ENCODE measurements at regions of chr5 and their contacts with region 1.

Region 1: GRCh38 chr5:160119142-160119904 is at the start of gene PWWP2A:
- DNase-seq: peak; percentile 86 to 100 (median 99)
- ATAC-seq: peak; percentile 96
- H3K4me3 ChIP-seq: peak within 1 kb of the TSS; percentile 79
- H3K4me3 Mint-ChIP-seq: peak within 1 kb of the TSS; percentile 83 to 99 (median 94)
- H3K27ac ChIP-seq: peak within 1 kb of the TSS; percentile 83
- H3K27ac Mint-ChIP-seq: peak within 1 kb of the TSS; percentile 83 to 98 (median 94)
- H3K4me1 ChIP-seq: peaks cover 0 to 5% of the 10 kb centered on the region in 2 donors
- H3K4me1 Mint-ChIP-seq: peaks cover 0 to 25% (median 20%) of the 10 kb centered on the region in 7 donors
- H3K27me3 ChIP-seq: no peaks in the 10 kb centered on the region
- H3K27me3 Mint-ChIP-seq: peaks cover 0 to 8% (median 0%) of the 10 kb centered on the region in 5 donors
- total RNA-seq, gene PWWP2A: 21.2 to 43.6 (median 29.5) TPM

Region 2: GRCh38 chr5:159100025-159100781 is 1019.1 kb before region 1 on chr5:
- CTCF ChIA-PET with region 1: no interaction called
- POLR2A ChIA-PET with region 1: no interaction called
- intact Hi-C with region 1: loop called (anchors 2 to 5 kb)
- DNase-seq: peak; percentile 72 to 86 (median 84)
- ATAC-seq: peak; percentile 93
- H3K4me3 ChIP-seq: peak overlapping the region; percentile 59
- H3K4me3 Mint-ChIP-seq: peak overlapping the region; percentile 87 to 93 (median 92)
- H3K27ac ChIP-seq: no peak overlapping the region
- H3K27ac Mint-ChIP-seq: peak overlapping the region; percentile 29 to 89 (median 75)
- H3K4me1 ChIP-seq: peaks cover 13 to 19% of the 10 kb centered on the region in 2 donors
- H3K4me1 Mint-ChIP-seq: peaks cover 31 to 51% (median 35%) of the 10 kb centered on the region in 7 donors
- H3K27me3 ChIP-seq: peaks cover 18 to 22% of the 10 kb centered on the region in 2 donors
- H3K27me3 Mint-ChIP-seq: peaks cover 52 to 92% (median 60%) of the 10 kb centered on the region in 5 donors

Region 3: GRCh38 chr5:160008877-160009590 is 110.3 kb before region 1 on chr5 and contains the start of gene TTC1:
- CTCF ChIA-PET with region 1: no interaction called
- POLR2A ChIA-PET with region 1: interaction called, 6 read pairs
- intact Hi-C with region 1: loop called (anchors 1 kb)
- DNase-seq: peak; percentile 71 to 96 (median 91)
- ATAC-seq: peak; percentile 99
- H3K4me3 ChIP-seq: peak within 1 kb of the TSS; percentile 84
- H3K4me3 Mint-ChIP-seq: peak within 1 kb of the TSS; percentile 93 to 99 (median 96)
- H3K27ac ChIP-seq: peak within 1 kb of the TSS; percentile 85
- H3K27ac Mint-ChIP-seq: peak within 1 kb of the TSS; percentile 91 to 99 (median 97)
- H3K4me1 ChIP-seq: peaks cover 9 to 13% of the 10 kb centered on the region in 2 donors
- H3K4me1 Mint-ChIP-seq: peaks cover 19 to 40% (median 31%) of the 10 kb centered on the region in 7 donors
- H3K27me3 ChIP-seq: no peaks in the 10 kb centered on the region
- H3K27me3 Mint-ChIP-seq: peaks cover 0 to 3% (median 0%) of the 10 kb centered on the region in 5 donors
- total RNA-seq, gene TTC1: 24.3 to 56.5 (median 41.7) TPM

Region 4: DNA sequence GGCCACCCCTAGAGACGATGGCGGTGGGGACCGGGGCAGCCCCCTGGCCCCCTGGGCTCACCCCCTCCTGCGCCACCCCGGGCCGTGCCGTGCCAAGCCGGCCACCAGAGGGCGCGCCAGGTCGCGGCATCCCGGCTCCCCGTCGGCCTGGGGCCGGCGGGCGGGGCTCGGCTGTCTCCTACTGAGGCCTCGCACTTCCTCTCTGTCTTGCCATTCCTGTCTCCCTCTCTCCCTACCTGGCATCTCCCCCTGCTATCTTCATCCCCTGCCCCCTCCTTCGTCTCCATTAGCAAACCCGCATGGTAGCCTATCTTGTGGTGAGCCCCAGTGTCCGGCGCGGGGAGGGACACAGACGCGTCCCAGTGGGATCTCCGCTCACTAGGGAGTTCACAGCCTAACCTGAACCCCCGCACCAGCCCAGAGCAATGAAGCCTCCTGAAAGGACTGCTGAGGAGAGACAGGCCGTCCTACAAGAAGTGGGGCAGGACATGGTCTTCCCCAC is 80.1 kb after region 1 on chr5:
- CTCF ChIA-PET with region 1: no interaction called
- POLR2A ChIA-PET with region 1: no interaction called
- intact Hi-C with region 1: loop called (anchors 1 to 2 kb)
- DNase-seq: peak; percentile 35 to 86 (median 66)
- ATAC-seq: peak; percentile 93
- H3K4me3 ChIP-seq: peak overlapping the region; percentile 52
- H3K4me3 Mint-ChIP-seq: peak overlapping the region; percentile 54 to 88 (median 78)
- H3K27ac ChIP-seq: no peak overlapping the region
- H3K27ac Mint-ChIP-seq: peak overlapping the region in 2 of 9 donors; percentile 53 to 74
- H3K4me1 ChIP-seq: peaks cover 0 to 3% of the 10 kb centered on the region in 2 donors
- H3K4me1 Mint-ChIP-seq: peaks cover 0 to 11% (median 3%) of the 10 kb centered on the region in 7 donors
- H3K27me3 ChIP-seq: no peaks in the 10 kb centered on the region
- H3K27me3 Mint-ChIP-seq: peaks cover 0 to 15% (median 10%) of the 10 kb centered on the region in 5 donors

Region 5: GRCh38 chr5:160418561-160419457 is 299.5 kb after region 1 on chr5 and contains the start of gene SLU7:
- CTCF ChIA-PET with region 1: no interaction called
- POLR2A ChIA-PET with region 1: interaction called, 6 read pairs
- intact Hi-C with region 1: loop called (anchors 1 kb)
- DNase-seq: peak; percentile 80 to 93 (median 91)
- ATAC-seq: peak; percentile 86
- H3K4me3 ChIP-seq: peak within 1 kb of the TSS; percentile 94
- H3K4me3 Mint-ChIP-seq: peak within 1 kb of the TSS; percentile 91 to 100 (median 96)
- H3K27ac ChIP-seq: peak within 1 kb of the TSS; percentile 98
- H3K27ac Mint-ChIP-seq: peak within 1 kb of the TSS; percentile 95 to 100 (median 98)
- H3K4me1 ChIP-seq: peaks cover 23 to 28% of the 10 kb centered on the region in 2 donors
- H3K4me1 Mint-ChIP-seq: peaks cover 45 to 85% (median 79%) of the 10 kb centered on the region in 7 donors
- H3K27me3 ChIP-seq: no peaks in the 10 kb centered on the region
- H3K27me3 Mint-ChIP-seq: no peaks in the 10 kb centered on the region
- total RNA-seq, gene SLU7: 53.0 to 85.3 (median 77.0) TPM

Region 6: DNA sequence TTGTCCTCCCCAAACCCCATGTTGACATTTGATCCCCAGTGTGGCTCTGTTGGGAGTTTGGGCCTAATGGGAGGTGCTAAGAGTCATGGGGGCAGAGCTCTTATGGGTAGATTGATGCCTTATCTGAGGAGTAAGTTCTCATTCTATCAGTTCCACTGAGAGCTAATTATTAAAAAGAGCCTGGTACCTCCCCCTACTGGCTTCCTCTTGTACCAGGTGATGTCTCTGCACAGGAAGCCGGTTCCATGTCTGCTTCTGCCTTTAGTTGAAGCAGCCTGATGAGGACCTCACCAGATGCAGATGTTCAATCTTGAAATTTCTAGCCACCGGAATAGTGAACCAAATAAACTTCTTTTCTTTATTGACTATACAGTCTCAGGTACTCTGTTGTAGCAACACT is 1416.4 kb after region 1 on chr5:
- CTCF ChIA-PET with region 1: no interaction called
- POLR2A ChIA-PET with region 1: no interaction called
- intact Hi-C with region 1: no loop called
- DNase-seq: no peak
- ATAC-seq: no peak
- H3K4me3 ChIP-seq: no peak overlapping the region
- H3K4me3 Mint-ChIP-seq: no peak overlapping the region
- H3K27ac ChIP-seq: no peak overlapping the region
- H3K27ac Mint-ChIP-seq: no peak overlapping the region
- H3K4me1 ChIP-seq: no peaks in the 10 kb centered on the region
- H3K4me1 Mint-ChIP-seq: no peaks in the 10 kb centered on the region
- H3K27me3 ChIP-seq: no peaks in the 10 kb centered on the region
- H3K27me3 Mint-ChIP-seq: peaks cover 0 to 4% (median 0%) of the 10 kb centered on the region in 5 donors